Body of pancreas (tissue), 4 donors: ENCODE measurements at regions of chr11 and their contacts with region 1.

Region 1: DNA sequence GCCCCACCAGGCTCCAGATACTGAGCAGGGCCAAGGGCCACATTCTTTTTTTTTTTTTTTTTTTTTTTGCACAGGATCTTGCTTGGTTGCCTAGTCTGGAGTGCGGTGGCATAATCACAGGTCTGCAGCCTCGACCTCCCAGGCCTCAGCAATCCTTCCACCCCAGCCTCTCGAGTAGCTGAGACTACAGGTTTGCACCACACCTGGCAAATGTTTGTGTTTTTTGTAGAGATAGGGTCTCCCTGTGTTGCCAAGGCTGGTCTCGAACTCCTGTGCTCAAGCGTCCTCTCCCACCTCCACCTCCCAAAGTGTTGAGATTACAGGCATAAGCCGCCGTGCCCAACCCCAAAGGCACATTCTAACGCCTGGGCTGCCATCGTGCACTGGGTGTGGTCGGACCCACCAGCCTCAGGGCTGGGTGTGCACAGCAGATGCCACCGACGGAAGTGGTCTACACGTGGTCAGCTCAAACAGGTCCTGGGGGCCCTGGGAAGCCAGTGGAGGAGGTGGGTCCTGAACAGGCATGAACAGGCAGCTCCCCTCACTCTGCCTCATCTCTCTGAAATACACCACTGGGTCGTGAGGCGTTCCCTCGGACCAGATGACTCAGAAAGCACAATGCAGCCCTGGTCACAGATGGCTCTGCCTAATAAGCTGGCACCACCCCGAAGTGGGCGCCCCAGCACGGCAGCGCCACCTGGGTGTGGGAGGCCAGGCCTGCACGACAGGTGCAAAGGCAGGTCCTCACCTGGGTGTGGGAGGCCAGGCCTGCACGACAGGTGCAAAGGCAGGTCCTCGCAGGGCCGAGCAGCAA is 5.1 kb upstream of the B4GALNT4 start:
- DNase-seq: peak; percentile 47 to 81 (median 73)
- ATAC-seq: peak; percentile 52
- H3K4me3 ChIP-seq: no peak overlapping the region
- H3K27ac ChIP-seq: no peak overlapping the region
- H3K4me1 ChIP-seq: peaks cover 6% of the 10 kb centered on the region
- H3K27me3 ChIP-seq: peaks cover 0 to 5% of the 10 kb centered on the region in 2 donors
- CTCF ChIP-seq: peak in 6 of 7 experiments; percentile 8 to 72 (median 45)
- POLR2A ChIP-seq: no peak

Region 2: DNA sequence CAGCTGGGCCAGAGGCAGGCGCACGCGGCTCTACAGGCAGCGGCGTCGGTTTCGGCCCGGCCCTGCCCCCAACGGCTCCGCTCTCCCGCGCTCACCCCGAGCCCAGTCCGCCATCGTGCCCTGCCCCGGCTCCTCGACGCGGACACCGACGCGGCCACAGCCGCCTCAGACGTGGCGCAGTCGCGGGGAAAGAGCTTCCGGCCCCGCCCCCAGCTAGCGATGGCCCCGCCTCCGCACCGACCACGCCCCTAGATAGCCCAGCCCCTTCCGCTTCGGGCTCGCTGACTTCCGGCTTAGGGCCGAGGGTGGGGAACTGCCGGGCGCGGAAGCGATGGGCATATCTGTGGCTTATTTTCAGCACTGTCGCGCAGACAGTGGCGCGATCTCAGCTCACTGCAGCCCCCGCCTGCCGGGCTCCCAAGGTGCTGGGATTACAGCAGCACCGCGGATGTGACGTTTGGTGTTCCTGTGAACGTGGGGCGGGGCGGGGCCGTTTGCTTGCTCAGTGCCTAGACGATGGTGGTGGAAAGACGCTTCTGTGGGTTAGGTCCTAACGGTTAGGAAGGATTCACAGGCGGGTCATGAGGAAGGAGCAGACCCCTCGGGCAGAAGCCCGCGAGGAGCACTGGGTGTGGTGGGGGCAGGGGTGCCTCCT is 156.8 kb before region 1 on chr11 and contains the starts of genes BET1L and RIC8A:
- intact Hi-C with region 1: no loop called
- DNase-seq: peak; percentile 95 to 98 (median 96)
- ATAC-seq: peak; percentile 91
- H3K4me3 ChIP-seq: peak within 1 kb of the TSS; percentile 87 to 97
- H3K27ac ChIP-seq: peak within 1 kb of the TSS; percentile 88 to 99 (median 98)
- H3K4me1 ChIP-seq: peaks cover 51% of the 10 kb centered on the region
- H3K27me3 ChIP-seq: no peaks in the 10 kb centered on the region
- CTCF ChIP-seq: no peak
- POLR2A ChIP-seq: peak; percentile 82 to 96 (median 91)
- total RNA-seq, gene BET1L: 22.3 to 31.0 TPM
- total RNA-seq, gene RIC8A: 59.3 to 88.5 TPM

Region 3: GRCh38 chr11:236774-237767 is 127.1 kb before region 1 on chr11 and contains the start of gene PSMD13:
- intact Hi-C with region 1: loop called (anchors 10 kb)
- DNase-seq: peak; percentile 83 to 87 (median 86)
- ATAC-seq: peak; percentile 89
- H3K4me3 ChIP-seq: peak within 1 kb of the TSS; percentile 81 to 100
- H3K27ac ChIP-seq: peak within 1 kb of the TSS; percentile 82 to 99 (median 93)
- H3K4me1 ChIP-seq: peaks cover 29% of the 10 kb centered on the region
- H3K27me3 ChIP-seq: no peaks in the 10 kb centered on the region
- CTCF ChIP-seq: peak in 2 of 7 experiments; percentile 12 to 38
- POLR2A ChIP-seq: peak; percentile 24 to 70 (median 54)
- total RNA-seq, gene PSMD13: 40.2 to 52.4 TPM

Region 4: GRCh38 chr11:304915-305843 is 59.0 kb before region 1 on chr11:
- intact Hi-C with region 1: loop called (anchors 5 kb)
- DNase-seq: peak; percentile 71 to 81 (median 74)
- ATAC-seq: peak; percentile 60
- H3K4me3 ChIP-seq: no peak overlapping the region
- H3K27ac ChIP-seq: no peak overlapping the region
- H3K4me1 ChIP-seq: peaks cover 25% of the 10 kb centered on the region
- H3K27me3 ChIP-seq: no peaks in the 10 kb centered on the region
- CTCF ChIP-seq: peak; percentile 47 to 85 (median 72)
- POLR2A ChIP-seq: no peak